ENCODE measurements at regions of chr4 and their contacts with region 1.

Region 1: DNA sequence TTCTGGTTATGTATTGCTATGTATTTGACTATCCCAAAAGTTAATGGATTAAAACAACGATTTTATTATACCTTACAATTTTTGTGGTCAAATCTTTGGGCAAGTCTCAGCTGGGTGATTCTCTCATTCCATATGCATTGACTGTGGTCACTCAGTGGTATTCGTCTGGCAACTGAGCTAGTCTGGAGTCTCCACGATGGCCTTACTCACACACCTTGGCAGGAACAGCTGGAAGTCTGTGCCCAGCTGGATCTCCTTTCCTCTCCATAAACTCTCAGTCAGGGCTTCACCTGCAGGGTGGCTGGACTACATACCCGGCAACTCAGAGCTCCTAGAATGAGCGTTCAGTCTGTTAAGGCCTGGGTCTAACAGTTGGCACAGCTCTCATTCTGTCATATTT is 141.1 kb upstream of the WDFY3 start:
- DNase-seq: peak; percentile 74
- H3K4me3 ChIP-seq: no peak overlapping the region
- CTCF ChIP-seq: no peak

Region 2: GRCh38 chr4:85402371-85402770 is 294.8 kb after region 1 on chr4:
- in situ Hi-C with region 1: no loop called
- DNase-seq: peak; percentile 97
- H3K4me3 ChIP-seq: no peak overlapping the region
- CTCF ChIP-seq: no peak

Region 3: GRCh38 chr4:85747882-85748491 is 640.4 kb after region 1 on chr4:
- in situ Hi-C with region 1: loop called (anchors 25 kb)
- DNase-seq: peak; percentile 78
- H3K4me3 ChIP-seq: no peak overlapping the region
- CTCF ChIP-seq: peak; percentile 78

Measured in astrocyte of the cerebellum (primary cell).